ENCODE measurements at regions of chr16 and their contacts with region 1.

Region 1: GRCh38 chr16:82432261-82432660 is 194.5 kb upstream of the CDH13 start:
- DNase-seq: no peak
- H3K4me3 ChIP-seq: no peak overlapping the region
- H3K27ac ChIP-seq: no peak overlapping the region
- H3K4me1 ChIP-seq: no peaks in the 10 kb centered on the region
- H3K27me3 ChIP-seq: no peaks in the 10 kb centered on the region
- CTCF ChIP-seq: no peak
- EP300 ChIP-seq: no peak
- POLR2A ChIP-seq: no peak

Region 2: GRCh38 chr16:82181456-82182185 is 250.6 kb before region 1 on chr16:
- intact Hi-C with region 1: no loop called
- DNase-seq: no peak
- H3K4me3 ChIP-seq: no peak overlapping the region
- H3K27ac ChIP-seq: no peak overlapping the region
- H3K4me1 ChIP-seq: no peaks in the 10 kb centered on the region
- H3K27me3 ChIP-seq: no peaks in the 10 kb centered on the region
- CTCF ChIP-seq: no peak
- EP300 ChIP-seq: no peak
- POLR2A ChIP-seq: no peak

Region 3: DNA sequence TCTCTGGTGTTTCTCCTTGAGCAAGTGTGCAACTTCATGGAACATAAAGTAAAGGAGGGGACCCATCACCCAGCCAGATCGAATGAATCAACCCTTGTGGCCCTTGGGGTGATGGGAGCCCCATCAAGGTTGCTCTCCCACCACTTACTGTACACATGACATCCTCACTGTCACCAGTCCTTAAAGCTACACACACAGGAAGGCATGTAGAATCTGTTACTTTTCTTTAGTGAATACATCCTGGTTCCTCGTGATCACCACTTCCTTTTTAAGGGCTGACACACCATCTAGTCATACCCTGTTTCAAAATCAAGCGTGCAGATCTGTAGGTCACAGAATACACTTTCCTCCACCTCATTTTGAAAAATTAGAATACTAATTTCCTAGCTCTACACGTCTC is 239.6 kb before region 1 on chr16:
- intact Hi-C with region 1: loop called in 1 of 4 experiments (anchors 5 kb)
- DNase-seq: no peak
- H3K4me3 ChIP-seq: no peak overlapping the region
- H3K27ac ChIP-seq: no peak overlapping the region
- H3K4me1 ChIP-seq: no peaks in the 10 kb centered on the region
- H3K27me3 ChIP-seq: no peaks in the 10 kb centered on the region
- CTCF ChIP-seq: no peak
- EP300 ChIP-seq: no peak
- POLR2A ChIP-seq: no peak

Region 4: GRCh38 chr16:82470620-82471152 is 38.4 kb after region 1 on chr16:
- intact Hi-C with region 1: no loop called
- DNase-seq: no peak
- H3K4me3 ChIP-seq: no peak overlapping the region
- H3K27ac ChIP-seq: no peak overlapping the region
- H3K4me1 ChIP-seq: no peaks in the 10 kb centered on the region
- H3K27me3 ChIP-seq: no peaks in the 10 kb centered on the region
- CTCF ChIP-seq: no peak
- EP300 ChIP-seq: no peak
- POLR2A ChIP-seq: no peak